Activated CD8-positive, alpha-beta T cell treated with anti-CD3 and anti-CD28 coated beads for 36 hours (primary cell): ENCODE measurements at regions of chr14 and their contacts with region 1.

Region 1: DNA sequence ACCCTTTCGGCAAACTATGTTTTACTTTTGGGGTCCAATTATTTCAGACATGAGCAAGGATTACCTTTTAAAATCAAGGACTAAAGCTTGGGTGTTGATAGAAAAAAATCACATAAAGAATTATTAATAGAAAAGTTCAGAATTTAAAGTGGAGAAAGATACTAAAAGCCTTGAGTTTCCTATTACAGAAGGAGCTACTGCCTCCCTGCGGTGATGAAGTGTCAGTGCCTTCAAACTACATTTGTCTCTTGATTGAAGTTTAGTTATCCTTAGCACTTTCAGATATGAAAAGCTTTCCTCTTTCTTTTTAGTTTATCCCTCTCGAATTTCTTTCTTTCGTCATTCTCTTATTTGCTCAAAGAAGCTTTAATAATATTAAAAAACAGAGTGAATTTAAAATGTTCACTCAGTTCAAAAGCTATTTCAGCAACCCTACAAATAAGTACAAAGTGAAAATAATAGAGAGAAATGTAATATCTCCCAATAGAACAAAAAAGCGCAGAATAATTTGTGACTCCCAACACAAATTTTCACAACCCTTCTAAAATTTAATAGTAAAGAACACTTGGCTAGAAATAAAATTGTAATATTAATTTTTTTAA is 87.6 kb downstream of the SEC23A start:
- DNase-seq: peak; percentile 43
- ATAC-seq: no peak
- H3K4me3 Mint-ChIP-seq: no peak overlapping the region
- H3K27ac Mint-ChIP-seq: no peak overlapping the region
- H3K4me1 Mint-ChIP-seq: no peaks in the 10 kb centered on the region
- H3K27me3 Mint-ChIP-seq: no peaks in the 10 kb centered on the region
- CTCF ChIP-seq: peak; percentile 77

Region 2: DNA sequence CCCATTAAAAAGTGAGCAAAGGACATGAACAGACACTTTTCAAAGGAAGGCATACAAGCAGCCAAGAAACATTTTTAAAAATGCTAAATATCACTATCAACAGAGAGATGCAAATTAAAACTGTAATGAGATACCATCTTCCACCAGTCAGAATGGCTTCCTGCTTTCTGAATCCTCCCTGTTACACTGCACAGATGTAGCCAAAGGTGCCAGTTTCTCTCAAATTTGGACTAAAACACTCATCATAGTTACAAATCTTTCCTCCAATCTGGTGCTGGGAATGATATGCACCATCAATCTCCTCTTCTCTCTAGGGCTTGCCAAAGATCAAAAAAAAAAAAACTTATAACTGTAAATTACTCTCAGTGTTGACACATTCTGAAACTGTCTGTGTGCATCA is 447.8 kb before region 1 on chr14:
- CTCF ChIA-PET with region 1: no interaction called
- POLR2A ChIA-PET with region 1: no interaction called
- intact Hi-C with region 1: no loop called
- DNase-seq: no peak
- ATAC-seq: no peak
- H3K4me3 Mint-ChIP-seq: no peak overlapping the region
- H3K27ac Mint-ChIP-seq: no peak overlapping the region
- H3K4me1 Mint-ChIP-seq: no peaks in the 10 kb centered on the region
- H3K27me3 Mint-ChIP-seq: no peaks in the 10 kb centered on the region
- CTCF ChIP-seq: no peak

Region 3: DNA sequence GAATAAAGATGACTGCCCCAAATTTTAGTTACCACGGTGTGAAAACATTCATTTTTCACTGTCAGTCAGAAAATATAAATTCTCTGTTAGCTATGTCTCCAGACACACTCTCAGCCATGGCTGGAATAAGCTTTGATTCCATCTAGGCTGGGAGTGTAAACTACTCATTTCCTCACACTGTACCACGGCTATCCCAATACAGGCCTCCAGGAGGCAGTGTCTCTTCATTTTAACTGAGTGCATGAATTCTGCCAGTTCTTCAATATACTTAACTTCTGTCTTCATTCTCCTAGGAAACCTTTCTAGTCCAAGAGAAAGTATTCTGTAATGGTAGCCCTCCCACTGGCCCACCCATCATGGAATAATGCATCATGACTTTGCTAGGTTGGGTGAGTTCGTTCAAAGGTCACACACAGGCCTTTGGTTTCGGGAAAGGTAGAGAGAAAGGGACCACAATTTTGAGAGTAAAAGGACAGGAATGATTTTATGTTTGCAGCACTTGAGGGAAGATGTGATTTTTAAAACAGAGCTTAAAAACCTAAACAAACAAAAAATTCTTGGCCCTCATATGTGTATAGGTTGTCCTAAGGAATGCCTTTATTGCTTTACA is 293.5 kb before region 1 on chr14:
- CTCF ChIA-PET with region 1: interaction called, 4 read pairs
- POLR2A ChIA-PET with region 1: no interaction called
- intact Hi-C with region 1: loop called (anchors 2 kb)
- DNase-seq: peak; percentile 63
- ATAC-seq: peak; percentile 69
- H3K4me3 Mint-ChIP-seq: no peak overlapping the region
- H3K27ac Mint-ChIP-seq: no peak overlapping the region
- H3K4me1 Mint-ChIP-seq: no peaks in the 10 kb centered on the region
- H3K27me3 Mint-ChIP-seq: no peaks in the 10 kb centered on the region
- CTCF ChIP-seq: peak; percentile 62

Region 4: DNA sequence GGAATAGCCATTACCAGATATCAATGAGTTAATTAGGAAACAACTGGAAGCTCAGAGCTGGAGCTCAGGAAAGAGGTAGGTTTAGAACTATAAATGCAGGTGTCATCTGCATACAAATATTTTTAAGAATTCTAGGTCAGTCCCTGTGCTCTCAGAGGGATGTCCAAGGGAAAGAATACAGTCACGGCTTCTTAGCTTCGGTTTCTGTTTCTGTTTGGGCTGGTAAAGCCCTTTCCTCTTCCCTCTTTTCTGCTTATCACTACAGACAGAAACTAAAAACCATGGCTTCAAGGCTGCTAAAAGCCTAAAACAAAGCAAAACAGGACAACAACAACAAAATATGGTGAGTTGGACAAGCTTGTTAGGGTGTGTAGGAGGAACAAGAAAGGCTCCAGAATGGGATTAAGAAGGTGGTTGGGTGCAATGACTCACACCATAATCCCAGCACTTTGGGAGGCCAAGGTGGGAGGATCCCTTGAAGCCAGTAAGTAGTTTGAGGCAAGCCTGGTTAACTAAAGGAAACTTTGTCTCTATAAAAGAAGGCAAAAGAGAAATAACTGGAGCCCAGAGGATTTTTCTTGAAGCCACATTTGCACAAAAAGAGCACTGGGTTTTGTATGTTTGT is 25.4 kb before region 1 on chr14:
- CTCF ChIA-PET with region 1: interaction called, 16 read pairs
- POLR2A ChIA-PET with region 1: no interaction called
- intact Hi-C with region 1: no loop called
- DNase-seq: no peak
- ATAC-seq: no peak
- H3K4me3 Mint-ChIP-seq: no peak overlapping the region
- H3K27ac Mint-ChIP-seq: no peak overlapping the region
- H3K4me1 Mint-ChIP-seq: peaks cover 10% of the 10 kb centered on the region
- H3K27me3 Mint-ChIP-seq: peaks cover 4% of the 10 kb centered on the region
- CTCF ChIP-seq: no peak

Region 5: DNA sequence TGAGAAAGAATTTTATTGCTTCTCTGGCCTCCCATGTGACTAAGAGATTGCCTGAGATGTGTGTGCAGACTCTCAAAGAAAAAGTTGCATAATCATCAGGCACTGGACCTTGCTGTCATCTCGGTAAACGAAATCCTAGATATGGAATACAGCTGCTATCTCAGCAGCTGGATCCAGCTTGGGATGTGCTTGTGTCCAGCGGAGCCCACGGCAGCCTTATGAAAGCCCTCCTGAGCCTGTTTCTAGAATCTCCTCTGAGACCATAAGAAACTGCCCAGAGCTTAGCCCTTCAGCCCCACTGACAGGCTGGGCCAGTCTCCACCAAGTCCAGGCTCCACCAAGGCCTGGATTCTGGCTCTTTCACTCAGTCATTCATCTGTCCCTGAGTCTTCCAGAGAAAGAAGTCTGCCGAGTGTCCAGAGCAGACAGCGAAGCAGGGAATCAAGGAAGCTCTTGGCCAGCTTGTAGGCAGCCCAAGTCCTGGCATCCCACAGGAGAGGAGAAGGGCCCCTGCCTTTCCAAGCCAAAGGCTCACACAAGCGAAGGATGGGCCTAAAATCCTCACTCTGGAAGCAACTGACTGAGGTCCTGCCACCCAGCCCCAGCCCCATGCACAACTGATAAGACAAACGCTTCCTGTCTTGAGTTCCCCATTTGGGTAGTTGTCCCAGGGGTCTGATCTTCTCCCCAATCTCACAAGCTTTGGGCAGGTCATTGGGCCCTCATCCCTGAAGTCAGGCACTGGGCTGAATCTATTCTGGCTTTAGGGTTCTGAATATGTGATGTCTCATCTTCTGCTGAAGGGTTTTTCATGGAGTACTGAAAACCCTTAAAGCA is 10.2 kb before region 1 on chr14:
- CTCF ChIA-PET with region 1: interaction called, 10 read pairs
- POLR2A ChIA-PET with region 1: no interaction called
- intact Hi-C with region 1: no loop called
- DNase-seq: no peak
- ATAC-seq: no peak
- H3K4me3 Mint-ChIP-seq: no peak overlapping the region
- H3K27ac Mint-ChIP-seq: no peak overlapping the region
- H3K4me1 Mint-ChIP-seq: no peaks in the 10 kb centered on the region
- H3K27me3 Mint-ChIP-seq: no peaks in the 10 kb centered on the region
- CTCF ChIP-seq: no peak

Region 6: DNA sequence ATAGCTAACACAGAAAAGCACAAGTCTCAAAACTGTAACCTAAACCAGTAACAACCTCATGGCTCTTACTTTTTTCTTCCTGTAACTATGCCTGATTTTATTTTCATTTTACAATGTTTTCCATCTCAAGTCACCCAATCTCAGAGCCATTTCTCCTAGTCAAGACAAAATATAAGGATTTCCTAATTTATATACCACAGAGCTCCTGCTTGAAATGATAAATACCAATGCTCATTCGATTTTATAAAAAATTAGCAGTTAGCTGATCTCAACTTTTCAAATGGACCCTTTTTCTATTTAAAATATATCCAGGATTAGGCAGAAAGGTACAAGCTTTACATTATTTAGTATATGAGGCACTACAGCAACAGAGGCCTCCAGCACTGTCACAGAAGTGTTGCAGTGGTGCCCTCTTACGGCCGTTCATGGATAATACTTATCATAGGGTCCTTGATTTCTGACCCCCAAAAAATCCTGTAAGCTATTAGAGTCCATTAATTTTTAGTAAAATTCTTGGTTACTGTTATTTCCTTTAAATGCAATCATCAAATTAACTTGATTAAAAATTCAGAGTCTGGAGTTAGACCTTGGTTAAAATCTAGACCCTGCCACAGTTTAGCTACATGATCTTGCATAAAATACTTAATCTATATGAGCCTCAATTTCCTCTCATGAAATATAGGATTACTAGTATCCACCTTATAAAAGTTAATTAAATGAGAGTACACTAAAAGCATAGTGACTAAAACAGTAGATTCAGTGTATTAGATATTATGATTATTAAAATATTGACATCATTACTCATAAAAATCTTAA is 19.2 kb after region 1 on chr14:
- CTCF ChIA-PET with region 1: interaction called, 10 read pairs
- POLR2A ChIA-PET with region 1: no interaction called
- intact Hi-C with region 1: no loop called
- DNase-seq: no peak
- ATAC-seq: no peak
- H3K4me3 Mint-ChIP-seq: no peak overlapping the region
- H3K27ac Mint-ChIP-seq: no peak overlapping the region
- H3K4me1 Mint-ChIP-seq: peaks cover 10% of the 10 kb centered on the region
- H3K27me3 Mint-ChIP-seq: no peaks in the 10 kb centered on the region
- CTCF ChIP-seq: no peak